ENCODE measurements at regions of chr6 and their contacts with region 1.

Region 1: DNA sequence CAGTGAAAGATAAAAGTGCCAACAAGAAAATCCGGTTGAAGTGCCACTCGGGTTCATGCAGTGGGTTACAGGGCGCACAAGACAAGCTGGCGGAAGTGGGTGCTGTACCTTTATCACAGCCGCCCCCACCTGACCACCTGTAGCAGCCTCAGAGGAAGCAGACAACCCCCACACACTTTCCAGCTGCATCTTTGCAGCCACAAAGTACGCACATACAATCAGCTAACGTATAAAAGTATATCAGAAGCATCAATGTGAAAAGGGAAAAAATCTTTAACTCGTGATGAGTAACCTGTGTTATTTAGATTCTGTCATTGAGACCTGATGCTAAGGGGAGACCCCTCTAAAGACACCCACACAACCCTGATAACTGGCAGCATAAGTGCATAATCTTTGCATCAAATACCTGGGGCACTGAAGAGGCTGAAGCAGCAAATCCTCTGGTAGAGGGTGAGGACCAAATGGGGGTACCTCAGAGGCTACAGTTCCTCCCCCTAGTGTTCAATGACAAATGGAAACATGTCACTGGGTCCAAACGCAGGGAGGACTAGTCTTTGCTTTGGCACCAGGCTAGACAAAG is 22.1 kb downstream of the BACH2 start:
- DNase-seq: peak; percentile 94
- ATAC-seq: peak; percentile 92
- H3K4me3 ChIP-seq: peak overlapping the region in 1 of 5 experiments; percentile 11
- H3K4me3 Mint-ChIP-seq: peak overlapping the region; percentile 59
- H3K27ac ChIP-seq: peak overlapping the region; percentile 95 to 97
- H3K27ac Mint-ChIP-seq: peak overlapping the region; percentile 87
- H3K4me1 ChIP-seq: peaks cover 55 to 75% of the 10 kb centered on the region in 2 donors
- H3K4me1 Mint-ChIP-seq: peaks cover 84% of the 10 kb centered on the region
- H3K27me3 ChIP-seq: no peaks in the 10 kb centered on the region
- H3K27me3 Mint-ChIP-seq: no peaks in the 10 kb centered on the region
- CTCF ChIP-seq: peak; percentile 34

Region 2: GRCh38 chr6:89940225-89941027 is 334.1 kb before region 1 on chr6:
- CTCF ChIA-PET with region 1: interaction called, 12 read pairs
- POLR2A ChIA-PET with region 1: no interaction called
- intact Hi-C with region 1: no loop called
- DNase-seq: peak; percentile 68
- ATAC-seq: peak; percentile 81
- H3K4me3 ChIP-seq: no peak overlapping the region
- H3K4me3 Mint-ChIP-seq: no peak overlapping the region
- H3K27ac ChIP-seq: no peak overlapping the region
- H3K27ac Mint-ChIP-seq: peak overlapping the region; percentile 64
- H3K4me1 ChIP-seq: no peaks in the 10 kb centered on the region
- H3K4me1 Mint-ChIP-seq: peaks cover 7% of the 10 kb centered on the region
- H3K27me3 ChIP-seq: no peaks in the 10 kb centered on the region
- H3K27me3 Mint-ChIP-seq: no peaks in the 10 kb centered on the region
- CTCF ChIP-seq: peak; percentile 79

Region 3: DNA sequence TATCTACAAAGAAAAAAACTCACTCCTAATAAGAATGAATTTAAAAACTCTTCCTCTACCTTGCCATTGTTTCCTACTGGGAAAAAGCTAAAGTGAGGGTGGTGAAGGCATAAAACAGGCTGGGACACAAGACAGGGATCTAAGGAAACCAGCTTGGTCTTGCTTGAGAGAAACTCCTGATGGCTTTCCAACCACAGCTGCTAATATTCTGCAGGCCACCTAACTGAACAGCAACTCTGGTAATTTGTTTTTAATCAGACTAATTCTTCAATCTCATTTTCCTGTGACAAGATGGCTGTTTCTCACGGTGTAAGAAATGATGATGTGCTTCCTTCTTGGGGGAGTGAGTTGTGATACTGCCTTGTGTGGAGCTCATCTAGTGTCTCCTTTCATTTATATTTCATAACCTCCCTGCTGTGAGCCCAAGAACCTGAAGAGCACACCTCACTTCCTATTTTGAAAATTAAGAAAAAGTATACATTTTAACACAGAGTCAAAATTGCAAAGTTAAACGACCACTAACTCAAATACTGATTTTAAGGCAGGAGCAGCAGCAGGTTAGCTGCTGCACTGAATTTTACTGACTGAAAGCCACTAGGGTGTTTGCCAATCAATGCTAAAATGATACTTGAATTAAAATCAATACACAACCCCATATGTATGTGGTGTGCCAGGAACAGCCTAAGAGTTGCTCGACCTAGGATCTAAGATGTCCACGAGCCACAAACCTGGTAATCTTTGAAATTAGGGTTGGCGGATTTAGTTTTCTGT is 35.9 kb before region 1 on chr6:
- CTCF ChIA-PET with region 1: no interaction called
- POLR2A ChIA-PET with region 1: no interaction called
- intact Hi-C with region 1: loop called (anchors 5 kb)
- DNase-seq: no peak
- ATAC-seq: no peak
- H3K4me3 ChIP-seq: no peak overlapping the region
- H3K4me3 Mint-ChIP-seq: no peak overlapping the region
- H3K27ac ChIP-seq: peak overlapping the region in 1 of 2 donors; percentile 55
- H3K27ac Mint-ChIP-seq: peak overlapping the region; percentile 0
- H3K4me1 ChIP-seq: peaks cover 25 to 32% of the 10 kb centered on the region in 2 donors
- H3K4me1 Mint-ChIP-seq: peaks cover 61% of the 10 kb centered on the region
- H3K27me3 ChIP-seq: no peaks in the 10 kb centered on the region
- H3K27me3 Mint-ChIP-seq: no peaks in the 10 kb centered on the region
- CTCF ChIP-seq: no peak

Region 4: GRCh38 chr6:90251295-90251992 is 23.1 kb before region 1 on chr6:
- CTCF ChIA-PET with region 1: interaction called, 4 read pairs
- POLR2A ChIA-PET with region 1: no interaction called
- intact Hi-C with region 1: loop called (anchors 2 kb)
- DNase-seq: peak; percentile 66
- ATAC-seq: peak; percentile 47
- H3K4me3 ChIP-seq: no peak overlapping the region
- H3K4me3 Mint-ChIP-seq: peak overlapping the region; percentile 3
- H3K27ac ChIP-seq: peak overlapping the region; percentile 25 to 80
- H3K27ac Mint-ChIP-seq: peak overlapping the region; percentile 22
- H3K4me1 ChIP-seq: peaks cover 33 to 47% of the 10 kb centered on the region in 2 donors
- H3K4me1 Mint-ChIP-seq: peaks cover 63% of the 10 kb centered on the region
- H3K27me3 ChIP-seq: no peaks in the 10 kb centered on the region
- H3K27me3 Mint-ChIP-seq: no peaks in the 10 kb centered on the region
- CTCF ChIP-seq: no peak

Region 5: DNA sequence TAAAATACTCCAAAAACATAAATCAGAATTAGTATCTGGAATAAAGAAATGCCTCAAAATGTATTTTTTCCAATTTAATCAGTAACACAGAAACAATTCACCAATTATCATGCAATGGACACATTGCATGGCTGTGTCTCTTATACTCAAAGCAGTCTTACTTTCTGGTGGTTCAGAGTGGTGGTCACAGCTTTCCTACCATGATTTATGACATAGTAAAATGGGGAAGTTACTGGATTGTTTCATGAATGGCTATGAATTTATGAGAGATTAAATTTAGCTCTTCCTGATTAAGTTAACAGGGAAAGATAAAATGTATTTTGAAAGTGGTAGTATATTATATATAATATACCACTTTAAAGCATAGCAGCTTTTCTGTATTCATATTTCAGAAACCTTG is 643.8 kb after region 1 on chr6:
- CTCF ChIA-PET with region 1: no interaction called
- POLR2A ChIA-PET with region 1: no interaction called
- intact Hi-C with region 1: no loop called
- DNase-seq: no peak
- ATAC-seq: no peak
- H3K4me3 ChIP-seq: no peak overlapping the region
- H3K4me3 Mint-ChIP-seq: no peak overlapping the region
- H3K27ac ChIP-seq: no peak overlapping the region
- H3K27ac Mint-ChIP-seq: no peak overlapping the region
- H3K4me1 ChIP-seq: no peaks in the 10 kb centered on the region
- H3K4me1 Mint-ChIP-seq: no peaks in the 10 kb centered on the region
- H3K27me3 ChIP-seq: no peaks in the 10 kb centered on the region
- H3K27me3 Mint-ChIP-seq: peaks cover 2% of the 10 kb centered on the region
- CTCF ChIP-seq: no peak

Measured in B cell (primary cell).